Caco-2 (cell line): ENCODE measurements at regions of chr15 and their contacts with region 1.

Region 1: GRCh38 chr15:91022075-91022835 is at the start of gene VPS33B:
- DNase-seq: peak; percentile 82 to 89
- H3K4me3 ChIP-seq: peak within 1 kb of the TSS; percentile 78
- H3K4me3 Mint-ChIP-seq: peak within 1 kb of the TSS; percentile 81
- H3K27ac Mint-ChIP-seq: peak within 1 kb of the TSS; percentile 81
- H3K4me1 ChIP-seq: peaks cover 12% of the 10 kb centered on the region; the same call in 1 of the 2 replicates
- H3K4me1 Mint-ChIP-seq: peaks cover 10% of the 10 kb centered on the region
- H3K27me3 ChIP-seq: no peaks in the 10 kb centered on the region
- H3K27me3 Mint-ChIP-seq: no peaks in the 10 kb centered on the region
- CTCF ChIP-seq: no peak
- total RNA-seq, gene VPS33B: 13.3 and 13.7 TPM in 2 replicates

Region 2: DNA sequence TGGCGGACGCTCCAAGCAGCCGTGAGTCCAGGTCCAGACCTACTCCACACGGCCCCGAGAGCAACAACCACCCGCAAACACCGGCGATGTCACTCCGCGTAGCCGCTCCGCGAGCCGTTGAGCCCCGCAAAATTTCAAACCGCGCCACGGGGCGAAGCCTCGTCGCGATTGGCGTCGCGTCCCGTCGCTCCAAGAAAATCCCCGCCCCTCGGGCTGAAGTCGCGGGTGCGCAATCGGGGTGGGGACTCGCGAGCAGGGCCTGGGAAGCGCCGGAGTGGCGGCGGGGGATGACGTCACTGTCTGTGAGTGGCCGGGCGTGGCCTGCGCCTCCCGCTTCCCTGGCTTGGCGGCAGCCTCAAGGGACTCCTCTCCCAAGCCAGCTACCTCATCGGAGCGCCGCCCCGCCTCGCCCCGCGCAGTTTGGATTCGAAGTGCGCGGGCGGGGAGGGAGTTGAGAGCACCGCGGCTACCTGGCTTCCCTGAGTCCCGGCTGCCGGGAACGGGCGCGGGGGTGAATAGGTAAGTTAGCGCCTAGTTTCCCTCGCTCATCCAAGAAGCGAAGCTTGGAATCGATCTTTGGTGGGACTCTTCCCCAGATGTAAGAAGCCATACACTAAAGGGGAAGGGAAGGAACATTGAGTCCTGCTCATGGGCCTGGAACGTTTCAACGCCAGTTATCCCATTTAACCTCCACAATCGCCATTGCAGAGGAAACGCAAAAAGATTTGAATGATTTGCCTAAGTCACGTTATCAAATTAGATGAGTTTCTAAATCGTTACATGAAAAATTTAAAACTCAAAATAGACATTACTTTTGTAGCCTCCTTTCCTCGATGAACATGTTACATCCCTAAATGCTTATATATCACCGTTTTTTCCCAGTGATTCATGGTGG is 27.6 kb before region 1 on chr15 and contains the start of gene PRC1:
- CTCF ChIA-PET with region 1: interaction called, 4 read pairs
- POLR2A ChIA-PET with region 1: interaction called, 16 read pairs
- intact Hi-C with region 1: loop called (anchors 2 kb)
- DNase-seq: peak; percentile 98 to 99
- H3K4me3 ChIP-seq: peak within 1 kb of the TSS; percentile 83
- H3K4me3 Mint-ChIP-seq: peak within 1 kb of the TSS; percentile 87
- H3K27ac Mint-ChIP-seq: peak within 1 kb of the TSS; percentile 96
- H3K4me1 ChIP-seq: peaks cover 13% of the 10 kb centered on the region
- H3K4me1 Mint-ChIP-seq: peaks cover 11% of the 10 kb centered on the region
- H3K27me3 ChIP-seq: no peaks in the 10 kb centered on the region
- H3K27me3 Mint-ChIP-seq: no peaks in the 10 kb centered on the region
- CTCF ChIP-seq: no peak
- total RNA-seq, gene PRC1: 142 and 145 TPM in 2 replicates

Region 3: DNA sequence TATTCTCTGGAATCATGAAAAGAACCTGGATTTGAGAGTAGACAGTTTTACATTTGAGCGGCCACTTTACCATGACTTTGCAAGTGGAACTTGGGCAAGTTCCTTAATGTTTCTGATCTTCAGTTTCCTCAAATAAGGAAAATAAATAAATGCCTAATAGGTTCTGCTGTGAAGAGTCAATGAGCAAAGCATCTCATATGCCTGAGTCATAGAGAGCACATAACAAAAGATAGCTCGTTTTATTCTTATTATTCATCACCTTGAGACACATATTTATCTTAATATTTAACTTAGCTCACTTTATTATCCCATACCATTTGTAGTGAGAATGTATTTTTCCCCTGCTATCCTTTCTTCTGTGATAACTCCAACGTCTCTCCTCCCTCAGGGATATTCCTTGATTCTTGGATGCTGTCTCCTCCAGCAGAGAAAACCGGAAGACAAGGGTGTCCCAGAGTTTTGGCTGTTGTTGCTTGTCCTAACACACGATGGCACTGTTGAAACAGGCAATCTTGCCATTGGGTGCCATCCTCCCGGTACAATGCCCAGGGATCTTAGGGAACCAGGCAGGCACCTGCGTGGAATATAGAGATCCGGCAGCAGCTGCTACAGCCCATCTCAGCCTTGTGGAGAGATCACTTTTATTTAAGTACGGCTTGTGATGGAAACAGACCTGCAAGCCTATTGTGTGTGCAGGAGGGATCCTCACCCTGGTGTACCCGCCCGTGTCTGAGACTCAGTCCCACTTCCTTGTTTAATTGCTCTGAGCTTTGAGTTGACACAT is 33.5 kb after region 1 on chr15:
- CTCF ChIA-PET with region 1: no interaction called
- POLR2A ChIA-PET with region 1: no interaction called
- intact Hi-C with region 1: no loop called
- DNase-seq: peak; percentile 62 to 63
- H3K4me3 ChIP-seq: no peak overlapping the region
- H3K4me3 Mint-ChIP-seq: no peak overlapping the region
- H3K27ac Mint-ChIP-seq: no peak overlapping the region
- H3K4me1 ChIP-seq: no peaks in the 10 kb centered on the region
- H3K4me1 Mint-ChIP-seq: no peaks in the 10 kb centered on the region
- H3K27me3 ChIP-seq: no peaks in the 10 kb centered on the region
- H3K27me3 Mint-ChIP-seq: peaks cover 36% of the 10 kb centered on the region
- CTCF ChIP-seq: peak; percentile 63 to 66

Region 4: GRCh38 chr15:91284758-91285466 is 262.7 kb after region 1 on chr15:
- CTCF ChIA-PET with region 1: no interaction called
- POLR2A ChIA-PET with region 1: interaction called, 10 read pairs
- intact Hi-C with region 1: no loop called
- DNase-seq: no peak
- H3K4me3 ChIP-seq: no peak overlapping the region
- H3K4me3 Mint-ChIP-seq: no peak overlapping the region
- H3K27ac Mint-ChIP-seq: no peak overlapping the region
- H3K4me1 ChIP-seq: no peaks in the 10 kb centered on the region
- H3K4me1 Mint-ChIP-seq: no peaks in the 10 kb centered on the region
- H3K27me3 ChIP-seq: peaks cover 1% of the 10 kb centered on the region
- H3K27me3 Mint-ChIP-seq: peaks cover 24% of the 10 kb centered on the region
- CTCF ChIP-seq: no peak